ENCODE measurements at regions of chr2 and their contacts with region 1.

Region 1: GRCh38 chr2:2083113-2083758 is 247.8 kb downstream of the MYT1L start:
- DNase-seq: no peak
- H3K4me3 ChIP-seq: no peak overlapping the region
- H3K27ac ChIP-seq: no peak overlapping the region
- H3K4me1 ChIP-seq: no peaks in the 10 kb centered on the region
- H3K27me3 ChIP-seq: no peaks in the 10 kb centered on the region
- CTCF ChIP-seq: no peak

Region 2: DNA sequence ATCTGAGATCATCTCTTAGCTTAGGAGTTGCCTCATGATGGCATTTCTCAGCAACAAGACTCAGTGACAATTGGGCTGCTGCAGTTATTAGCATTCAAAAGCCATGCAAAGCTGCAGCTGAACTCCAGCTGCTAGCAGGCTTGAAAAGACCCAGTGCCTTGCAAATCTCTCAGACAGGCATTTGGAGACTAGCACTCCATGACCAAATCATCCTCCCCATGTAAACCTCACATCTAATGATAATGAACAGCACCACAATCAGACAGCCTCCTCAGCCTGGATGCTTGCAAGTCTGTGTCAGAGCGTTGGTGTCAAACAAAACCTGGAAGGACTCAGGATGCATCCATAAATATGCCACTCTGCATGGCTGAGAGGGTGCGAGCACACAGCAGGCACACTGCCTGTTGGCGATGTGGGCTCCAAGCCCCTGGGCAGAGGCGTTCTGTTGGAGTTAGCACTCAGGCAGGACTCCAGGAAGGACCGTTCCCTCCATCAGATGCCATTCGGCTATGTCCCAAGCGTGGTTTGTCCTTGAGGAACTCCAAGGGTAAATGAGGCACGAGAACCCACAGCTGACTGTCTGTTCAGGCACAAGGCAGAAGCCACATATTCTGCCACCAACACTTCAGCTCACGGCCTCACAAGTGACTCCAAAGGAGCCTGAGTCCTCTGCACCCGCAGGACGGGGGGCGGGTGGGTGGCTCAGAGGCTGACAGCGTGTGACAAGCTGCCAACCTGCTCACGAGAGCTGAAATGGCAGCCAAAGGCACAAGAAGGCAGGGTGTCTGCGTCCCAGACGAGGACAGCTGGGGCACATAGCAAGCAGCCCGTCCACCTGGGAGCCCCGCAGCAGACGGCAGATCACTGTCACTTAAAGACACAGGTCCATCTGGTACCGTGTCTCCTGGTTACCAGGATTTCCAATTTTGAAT is 64.0 kb after region 1 on chr2:
- CTCF ChIA-PET with region 1: no interaction called
- dilution Hi-C with region 1: loop called (anchors 10 kb)
- in situ Hi-C with region 1: no loop called
- intact Hi-C with region 1: no loop called
- DNase-seq: no peak
- H3K4me3 ChIP-seq: no peak overlapping the region
- H3K27ac ChIP-seq: no peak overlapping the region
- H3K4me1 ChIP-seq: no peaks in the 10 kb centered on the region
- H3K27me3 ChIP-seq: no peaks in the 10 kb centered on the region
- CTCF ChIP-seq: no peak

Region 3: GRCh38 chr2:2484296-2484695 is 401.1 kb after region 1 on chr2:
- CTCF ChIA-PET with region 1: no interaction called
- dilution Hi-C with region 1: no loop called
- in situ Hi-C with region 1: no loop called
- intact Hi-C with region 1: no loop called
- DNase-seq: no peak
- H3K4me3 ChIP-seq: no peak overlapping the region
- H3K27ac ChIP-seq: no peak overlapping the region
- H3K4me1 ChIP-seq: no peaks in the 10 kb centered on the region
- H3K27me3 ChIP-seq: no peaks in the 10 kb centered on the region
- CTCF ChIP-seq: no peak